ENCODE measurements at regions of chr17 and their contacts with region 1.

Region 1: DNA sequence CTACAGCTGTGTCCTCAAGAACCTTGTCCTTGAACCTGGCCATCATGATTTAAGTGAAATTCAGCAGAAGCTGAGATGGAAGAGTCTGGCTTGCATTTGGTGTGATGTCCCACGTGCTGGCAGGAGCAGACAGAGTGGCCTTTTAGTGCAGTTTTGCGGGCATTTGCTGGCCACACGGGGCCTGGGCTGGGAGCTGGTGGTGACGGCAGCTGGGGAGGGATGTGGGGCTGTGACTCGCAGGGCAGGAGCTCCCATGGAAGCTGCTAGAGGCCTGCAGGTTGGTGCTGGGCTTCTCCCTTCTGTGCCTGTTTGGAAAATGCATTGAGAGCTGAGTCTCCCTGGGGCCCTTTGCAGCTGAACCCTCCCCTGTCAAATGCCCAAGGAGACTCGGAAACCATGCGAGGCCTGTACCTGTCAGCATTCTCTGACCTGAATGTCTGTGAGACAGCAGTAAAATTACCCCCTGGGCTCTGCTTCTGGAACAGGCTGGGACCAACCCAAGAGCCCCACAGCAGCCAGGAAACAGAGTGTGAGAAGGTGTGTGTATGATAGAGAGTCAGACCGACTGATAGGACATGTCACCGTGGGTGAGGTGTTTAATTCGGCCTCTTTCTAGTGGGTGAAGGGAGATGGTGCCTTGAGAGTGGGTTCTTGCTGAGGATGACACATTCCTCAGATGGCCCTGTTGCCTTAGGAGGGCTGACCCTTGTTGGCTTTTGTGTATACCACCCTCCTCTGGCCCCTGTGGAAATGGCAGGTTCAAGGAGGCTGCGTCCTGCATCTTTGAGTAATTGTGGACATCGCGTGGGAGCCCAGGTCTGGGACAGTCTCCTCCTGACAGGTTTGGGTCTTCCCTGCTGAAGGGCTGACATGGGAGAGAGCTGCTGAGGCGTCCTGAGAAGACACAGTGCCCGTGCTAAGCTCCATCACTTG is 145.5 kb downstream of the MSI2 start:
- DNase-seq: no peak
- H3K4me3 ChIP-seq: no peak overlapping the region
- CTCF ChIP-seq: no peak

Region 2: GRCh38 chr17:57243171-57243948 is 158.5 kb before region 1 on chr17:
- in situ Hi-C with region 1: no loop called
- DNase-seq: peak; percentile 35
- H3K4me3 ChIP-seq: no peak overlapping the region
- CTCF ChIP-seq: peak; percentile 100

Region 3: DNA sequence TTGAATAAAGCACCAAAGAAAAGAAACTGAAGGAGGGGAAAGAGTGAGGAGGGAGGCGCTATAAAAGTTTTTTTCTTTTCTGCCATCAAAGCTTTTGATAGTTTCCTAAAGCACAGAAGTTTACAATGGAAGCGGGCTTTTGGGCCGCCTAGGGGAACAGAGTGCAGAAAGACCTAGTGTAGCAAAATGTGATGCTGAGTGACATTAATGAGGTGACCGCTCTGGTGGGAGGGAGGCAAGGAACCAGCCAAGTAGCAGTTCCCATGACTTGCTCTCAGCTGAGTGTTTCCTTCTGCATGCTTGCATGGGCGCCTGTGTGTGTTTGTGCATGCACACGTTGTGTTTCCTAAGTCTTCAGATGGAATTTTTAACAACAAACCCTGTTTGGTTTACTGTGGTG is 130.0 kb before region 1 on chr17:
- in situ Hi-C with region 1: no loop called
- DNase-seq: no peak
- H3K4me3 ChIP-seq: no peak overlapping the region
- CTCF ChIP-seq: no peak

Region 4: DNA sequence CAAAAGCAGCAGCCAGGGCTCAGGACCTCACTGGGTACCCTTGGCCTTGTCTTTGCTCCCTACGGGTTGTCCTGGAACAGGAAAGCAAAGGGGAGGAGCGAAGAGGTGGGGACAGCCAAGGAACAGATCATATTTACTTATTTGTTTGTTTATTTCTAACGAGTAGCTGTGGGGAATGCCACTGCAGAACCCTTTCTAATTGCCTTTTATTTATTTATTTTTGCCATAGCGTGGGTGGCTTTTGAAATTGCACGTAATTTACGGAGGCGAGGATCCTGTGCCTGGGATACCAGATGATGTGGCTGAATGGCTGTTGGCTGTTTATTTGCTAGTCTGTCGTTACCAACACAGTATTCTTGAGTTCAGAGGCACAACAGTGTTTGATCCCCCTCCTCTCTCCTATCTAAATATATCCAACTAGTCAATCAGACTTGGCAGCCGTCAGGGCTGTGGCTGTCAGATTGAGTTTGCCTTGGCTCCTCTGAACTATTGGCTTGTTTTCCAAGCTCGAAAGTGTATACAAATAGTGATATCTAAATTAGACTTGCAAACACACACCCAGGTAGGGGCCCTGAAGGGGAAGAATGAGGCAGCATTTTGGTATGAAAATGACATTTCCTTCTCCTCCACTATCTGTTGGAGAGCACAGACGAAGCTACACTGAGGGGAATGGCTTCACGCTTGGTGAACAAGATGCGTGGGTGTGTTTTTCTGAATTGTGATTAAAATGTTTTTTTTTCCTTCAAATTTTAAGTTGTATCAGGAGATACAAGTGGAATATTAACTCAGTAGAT is 35.1 kb before region 1 on chr17:
- in situ Hi-C with region 1: no loop called
- DNase-seq: no peak
- H3K4me3 ChIP-seq: no peak overlapping the region
- CTCF ChIP-seq: no peak

Region 5: DNA sequence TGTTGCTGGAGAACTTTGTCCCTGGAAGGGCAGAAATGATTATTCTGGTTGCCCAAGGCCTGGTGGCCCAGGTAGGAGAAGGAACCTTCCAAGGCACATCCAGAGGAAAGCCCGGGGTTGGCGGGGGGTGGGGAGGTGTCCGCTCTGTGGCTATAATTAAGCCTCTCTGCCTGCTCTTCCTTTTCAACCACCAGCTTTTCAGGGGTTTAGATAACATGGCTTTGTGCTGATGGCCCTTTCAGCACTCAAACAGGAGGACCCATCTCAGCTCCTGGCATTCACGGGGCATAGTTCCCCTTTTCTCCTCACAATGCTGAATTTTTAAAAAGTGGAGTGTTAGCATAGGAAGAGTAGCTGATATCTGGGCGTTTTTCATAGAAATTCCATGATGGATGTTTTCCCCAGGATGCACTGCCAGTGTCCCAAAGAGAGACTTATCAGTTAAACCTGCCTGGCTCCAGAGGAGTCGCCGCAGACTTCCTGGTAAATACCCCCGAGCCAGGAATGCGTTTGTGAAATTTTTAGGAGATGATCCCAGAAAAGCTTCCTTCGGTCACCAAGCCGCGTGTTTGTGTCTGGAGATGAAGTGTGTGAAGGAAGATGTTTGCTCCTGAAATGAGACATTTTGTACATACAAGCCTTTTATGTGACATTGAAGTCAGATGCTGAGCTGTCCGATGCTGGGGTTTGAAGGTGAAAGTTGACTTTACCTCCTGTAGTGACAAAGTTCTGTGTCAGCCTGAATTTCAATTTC is 43.0 kb after region 1 on chr17:
- in situ Hi-C with region 1: loop called (anchors 5 kb)
- DNase-seq: no peak
- H3K4me3 ChIP-seq: no peak overlapping the region
- CTCF ChIP-seq: no peak

Region 6: GRCh38 chr17:57499648-57500049 is 97.8 kb after region 1 on chr17:
- in situ Hi-C with region 1: no loop called
- DNase-seq: peak; percentile 47
- H3K4me3 ChIP-seq: no peak overlapping the region
- CTCF ChIP-seq: peak; percentile 24